Activated CD8-positive, alpha-beta T cell treated with anti-CD3 and anti-CD28 coated beads, Interleukin-2, amount 10 ng/mL, durations not matched to agents 7 days and 5 days (primary cell): ENCODE measurements at regions of chr18 and their contacts with region 1.

Region 1: DNA sequence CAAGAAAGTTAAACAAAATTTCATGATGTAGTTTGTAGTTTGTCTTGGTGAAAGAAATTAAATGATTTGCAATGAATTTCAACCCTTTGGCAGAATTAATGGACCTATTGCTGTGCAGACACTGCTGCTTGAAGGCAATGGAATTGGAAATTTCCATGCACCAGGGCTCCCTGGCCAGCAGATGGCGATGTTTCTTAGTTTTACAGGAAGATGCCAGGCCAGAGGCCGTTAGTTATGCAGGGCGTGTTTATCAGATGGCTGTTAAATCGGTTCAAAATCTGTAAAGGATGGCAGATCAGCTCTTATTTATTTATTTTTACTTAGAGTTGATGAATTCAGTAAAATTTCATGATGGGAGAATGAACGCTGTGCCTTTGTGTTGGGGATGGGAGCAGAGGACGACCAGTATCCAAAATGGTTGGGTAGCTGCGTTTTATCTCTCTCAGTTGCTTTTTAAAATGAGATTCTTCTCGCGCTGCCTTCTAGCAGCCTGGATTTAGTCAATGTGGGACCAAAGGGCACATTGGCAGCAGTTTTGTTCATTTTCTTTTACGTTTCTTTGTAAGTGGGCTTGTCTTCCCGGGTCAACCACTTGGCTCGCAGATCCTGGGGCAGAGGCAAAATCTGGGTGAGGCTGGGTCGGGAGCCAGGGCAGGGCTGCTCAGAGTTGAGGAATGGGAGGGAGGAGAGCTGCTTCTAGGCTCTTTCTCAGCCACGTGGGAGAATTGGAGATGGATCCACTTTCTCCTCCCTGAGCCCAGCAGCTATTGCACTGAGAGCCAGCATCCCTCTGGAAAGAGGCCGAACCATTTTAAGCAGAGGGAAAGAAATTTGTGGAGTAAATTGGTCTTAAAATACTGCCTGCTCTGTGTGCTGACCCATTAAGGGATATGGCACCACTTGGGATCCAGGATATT is 344.0 kb downstream of the PIK3C3 start:
- DNase-seq: peak; percentile 70
- ATAC-seq: peak; percentile 55
- H3K4me3 Mint-ChIP-seq: no peak overlapping the region
- H3K27ac Mint-ChIP-seq: no peak overlapping the region
- H3K4me1 Mint-ChIP-seq: no peaks in the 10 kb centered on the region
- H3K27me3 Mint-ChIP-seq: no peaks in the 10 kb centered on the region

Region 2: DNA sequence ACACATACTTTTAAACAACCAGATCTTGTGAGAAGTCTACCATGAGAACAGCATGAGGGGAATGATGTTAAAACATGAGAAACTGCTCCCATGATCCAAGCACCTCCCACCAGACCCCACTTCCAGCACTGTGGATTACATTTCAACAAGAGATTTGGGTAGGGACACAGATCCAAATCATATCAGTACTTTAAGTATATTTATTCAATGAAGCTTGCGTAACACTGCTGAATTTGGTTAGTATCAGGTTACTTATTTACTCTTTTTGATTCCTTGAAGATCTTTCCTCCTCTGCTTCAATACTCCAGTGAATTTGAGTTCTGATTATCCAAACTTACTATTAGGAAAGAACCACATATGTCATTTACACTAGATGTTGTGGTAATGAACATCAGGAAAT is 74.6 kb after region 1 on chr18:
- CTCF ChIA-PET with region 1: no interaction called
- POLR2A ChIA-PET with region 1: no interaction called
- DNase-seq: no peak
- ATAC-seq: no peak
- H3K4me3 Mint-ChIP-seq: no peak overlapping the region
- H3K27ac Mint-ChIP-seq: no peak overlapping the region
- H3K4me1 Mint-ChIP-seq: no peaks in the 10 kb centered on the region
- H3K27me3 Mint-ChIP-seq: no peaks in the 10 kb centered on the region

Region 3: GRCh38 chr18:43271593-43272432 is 972.8 kb after region 1 on chr18:
- CTCF ChIA-PET with region 1: interaction called, 11 read pairs
- POLR2A ChIA-PET with region 1: no interaction called
- DNase-seq: peak; percentile 42
- ATAC-seq: no peak
- H3K4me3 Mint-ChIP-seq: no peak overlapping the region
- H3K27ac Mint-ChIP-seq: no peak overlapping the region
- H3K4me1 Mint-ChIP-seq: no peaks in the 10 kb centered on the region
- H3K27me3 Mint-ChIP-seq: no peaks in the 10 kb centered on the region